ENCODE measurements at regions of chr12 and their contacts with region 1.

Region 1: GRCh38 chr12:56120158-56120844 is 2.2 kb downstream of the ZC3H10 start:
- DNase-seq: peak in 1 of 4 donors; percentile 79
- ATAC-seq: no peak
- H3K4me3 ChIP-seq: no peak overlapping the region
- H3K27ac ChIP-seq: peak overlapping the region in 1 of 2 donors; percentile 50
- H3K4me1 ChIP-seq: peaks cover 15 to 49% of the 10 kb centered on the region in 2 donors
- H3K27me3 ChIP-seq: no peaks in the 10 kb centered on the region
- CTCF ChIP-seq: no peak

Region 2: GRCh38 chr12:56158029-56158925 is 38.0 kb after region 1 on chr12 and contains the start of gene MYL6:
- intact Hi-C with region 1: no loop called
- DNase-seq: peak; percentile 92 to 99 (median 97)
- ATAC-seq: peak; percentile 88
- H3K4me3 ChIP-seq: peak within 1 kb of the TSS; percentile 47 to 88
- H3K27ac ChIP-seq: peak within 1 kb of the TSS; percentile 94 to 97
- H3K4me1 ChIP-seq: peaks cover 21 to 48% of the 10 kb centered on the region in 2 donors
- H3K27me3 ChIP-seq: no peaks in the 10 kb centered on the region
- CTCF ChIP-seq: no peak
- polyA plus RNA-seq, gene MYL6: 1,831 to 2,250 (median 2,105) TPM

Region 3: DNA sequence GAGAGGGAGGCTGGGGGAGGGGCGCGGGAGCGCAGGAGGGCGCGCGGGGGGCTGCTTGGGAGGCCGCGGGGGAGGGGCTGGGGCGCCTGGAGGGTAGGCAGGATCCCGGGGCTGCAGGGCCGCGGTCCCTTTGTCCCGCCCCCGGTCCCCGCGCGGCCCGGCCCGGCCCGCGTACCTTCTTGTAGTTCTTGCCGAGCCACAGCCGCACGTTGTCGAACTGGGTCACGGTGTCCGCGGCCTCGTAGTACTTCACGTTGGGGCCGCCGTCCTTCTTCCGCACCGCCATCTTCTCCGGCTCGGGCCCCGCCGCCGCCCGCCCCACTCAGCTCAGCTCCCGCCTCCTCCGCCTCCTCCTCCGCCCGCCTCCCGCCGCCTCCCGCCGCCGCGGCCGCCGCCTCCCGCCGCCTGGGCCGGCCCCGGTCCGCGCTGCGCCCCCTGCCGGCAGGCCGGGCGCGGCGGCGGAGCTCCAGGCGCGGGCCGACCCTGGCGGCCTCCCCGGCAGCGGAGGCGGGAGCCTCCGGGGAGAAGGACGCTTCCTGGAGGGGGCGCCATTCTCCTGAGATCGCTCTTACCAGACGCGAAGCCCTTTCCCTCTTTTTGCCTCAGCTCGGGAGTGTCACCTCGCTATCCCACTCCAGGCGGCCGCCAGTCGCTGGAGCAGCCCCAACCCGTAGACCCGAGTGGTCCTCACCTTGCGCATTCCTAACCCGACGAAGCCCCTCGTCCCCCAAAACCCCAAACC is 69.0 kb after region 1 on chr12 and contains the start of gene SMARCC2:
- intact Hi-C with region 1: loop called in 1 of 2 experiments (anchors 5 kb)
- DNase-seq: peak; percentile 80 to 97 (median 90)
- ATAC-seq: peak; percentile 91
- H3K4me3 ChIP-seq: peak within 1 kb of the TSS; percentile 79 to 83
- H3K27ac ChIP-seq: peak within 1 kb of the TSS; percentile 88 to 94
- H3K4me1 ChIP-seq: peaks cover 10 to 29% of the 10 kb centered on the region in 2 donors
- H3K27me3 ChIP-seq: no peaks in the 10 kb centered on the region
- CTCF ChIP-seq: peak; percentile 60 to 77
- polyA plus RNA-seq, gene SMARCC2: 113 to 139 (median 121) TPM